Activated CD4-positive, alpha-beta T cell treated with anti-CD3 and anti-CD28 coated beads, Interleukin-2, amount 10 ng/mL, durations not matched to agents 24 days and 14 days (primary cell): ENCODE measurements at regions of chr19 and their contacts with region 1.

Region 1: DNA sequence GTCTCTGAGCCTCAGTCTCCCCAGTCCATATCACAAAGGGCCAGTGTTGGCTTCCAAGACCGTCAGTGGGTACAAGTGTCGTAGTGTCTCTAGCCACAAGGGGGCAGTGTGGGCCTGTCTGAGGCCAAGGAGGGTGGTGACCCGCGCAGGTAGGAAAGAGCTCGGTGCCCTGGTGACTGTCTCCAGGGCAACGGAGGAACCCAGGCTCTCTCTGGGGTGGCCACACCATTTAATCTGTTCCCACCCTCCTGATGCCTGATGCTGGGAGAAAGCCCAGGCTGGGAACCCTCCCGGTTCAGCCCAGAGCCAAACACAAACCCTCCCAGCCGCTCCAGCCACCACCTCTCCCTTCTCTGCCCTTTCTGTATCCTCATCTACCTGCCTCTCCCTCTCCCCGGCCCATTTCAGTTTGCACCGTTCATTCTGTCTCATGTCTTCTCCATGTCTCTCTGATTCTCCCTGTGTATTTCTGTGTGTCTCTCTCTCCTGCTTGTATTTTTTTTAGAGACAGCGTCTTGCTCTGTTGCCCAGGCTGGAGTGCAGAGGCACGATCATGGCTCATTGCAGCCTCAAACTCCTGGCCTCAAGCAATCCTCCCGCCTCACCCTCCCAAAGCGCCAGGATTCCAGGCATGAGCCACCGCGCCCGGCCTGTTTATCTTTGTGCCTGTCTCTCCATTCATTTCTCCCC is 17.5 kb upstream of the MEIS3 start:
- DNase-seq: peak; percentile 95
- H3K4me3 Mint-ChIP-seq: peak overlapping the region; percentile 19
- H3K27ac Mint-ChIP-seq: peak overlapping the region; percentile 19
- H3K4me1 Mint-ChIP-seq: peaks cover 34% of the 10 kb centered on the region
- H3K27me3 Mint-ChIP-seq: peaks cover 24% of the 10 kb centered on the region

Region 2: DNA sequence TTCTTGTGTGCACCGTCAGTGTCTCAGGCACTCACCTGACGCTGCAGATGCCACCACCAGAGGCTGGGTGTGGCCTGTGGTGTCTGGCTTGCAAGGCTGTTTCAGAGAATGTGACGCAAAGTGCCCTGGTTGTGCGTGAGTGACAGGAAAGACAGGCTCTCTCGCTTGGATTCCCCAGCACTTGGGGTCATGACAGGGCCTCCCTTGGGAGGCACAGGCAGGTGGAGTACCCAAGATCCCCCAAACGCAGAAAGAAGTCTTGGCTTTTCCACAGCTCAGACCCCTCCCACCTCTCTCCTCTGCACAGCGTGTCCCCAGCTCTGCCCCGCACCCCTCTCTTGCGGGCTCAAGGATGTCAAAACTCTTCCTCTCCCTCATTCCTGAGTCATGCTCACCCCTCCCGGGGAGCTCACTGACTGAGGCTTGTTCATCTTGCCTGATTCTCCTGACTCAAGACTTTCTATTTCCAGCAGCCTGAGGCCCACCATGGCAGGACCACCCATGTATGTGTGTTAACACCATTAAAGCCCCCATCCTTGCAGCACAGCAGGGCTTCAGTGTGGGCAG is 66.7 kb before region 1 on chr19:
- intact Hi-C with region 1: no loop called
- DNase-seq: no peak
- H3K4me3 Mint-ChIP-seq: no peak overlapping the region
- H3K27ac Mint-ChIP-seq: no peak overlapping the region
- H3K4me1 Mint-ChIP-seq: peaks cover 3% of the 10 kb centered on the region
- H3K27me3 Mint-ChIP-seq: no peaks in the 10 kb centered on the region

Region 3: GRCh38 chr19:47447470-47448359 is 10.9 kb after region 1 on chr19:
- intact Hi-C with region 1: no loop called
- DNase-seq: peak; percentile 92
- H3K4me3 Mint-ChIP-seq: peak overlapping the region; percentile 75
- H3K27ac Mint-ChIP-seq: peak overlapping the region; percentile 16
- H3K4me1 Mint-ChIP-seq: peaks cover 41% of the 10 kb centered on the region
- H3K27me3 Mint-ChIP-seq: peaks cover 68% of the 10 kb centered on the region

Region 4: DNA sequence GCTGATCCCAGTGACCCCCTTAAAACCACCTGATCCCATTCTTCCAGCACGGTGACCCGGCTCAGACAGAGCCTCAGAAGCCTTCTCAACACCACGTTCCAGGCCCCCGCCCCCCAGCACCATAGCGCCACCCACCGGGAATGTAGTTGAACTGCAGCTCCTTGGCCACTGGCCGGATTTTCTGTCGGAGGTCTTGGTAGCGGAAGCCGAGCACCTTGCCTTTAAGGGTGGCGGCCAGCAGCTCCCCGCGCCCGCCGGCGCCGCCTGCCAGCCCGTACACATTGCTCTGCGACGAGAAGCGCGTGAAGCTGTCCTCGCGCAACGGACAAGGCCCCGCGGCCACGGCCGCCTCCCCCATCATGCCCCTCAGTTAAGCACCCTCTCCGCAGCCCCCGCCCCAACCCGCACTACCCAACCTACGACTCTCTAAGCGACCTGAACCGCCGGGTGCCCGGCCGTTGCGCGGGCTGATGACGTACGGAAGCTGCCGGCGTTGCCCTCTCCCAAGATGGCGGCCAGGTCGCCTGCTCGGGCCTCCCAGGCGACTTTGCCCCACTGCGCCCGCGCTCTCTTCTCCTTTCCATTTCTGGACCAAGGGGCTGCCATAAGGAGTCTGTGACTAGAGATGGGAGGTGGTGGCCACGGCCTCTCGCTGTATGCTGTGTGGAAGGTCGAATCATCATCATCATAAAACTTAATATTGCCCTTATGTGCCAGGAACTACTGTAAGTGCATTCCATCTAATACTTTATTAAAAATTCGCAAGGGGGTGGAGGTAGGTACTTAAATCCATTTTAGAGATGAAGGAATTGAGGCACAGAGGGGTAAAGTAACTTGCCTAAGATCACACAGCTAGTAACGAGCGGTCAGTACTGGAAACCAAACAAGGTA is 47.2 kb after region 1 on chr19 and contains the start of gene KPTN:
- intact Hi-C with region 1: loop called (anchors 2 kb)
- DNase-seq: peak; percentile 97
- H3K4me3 Mint-ChIP-seq: peak within 1 kb of the TSS; percentile 99
- H3K27ac Mint-ChIP-seq: peak within 1 kb of the TSS; percentile 98
- H3K4me1 Mint-ChIP-seq: peaks cover 21% of the 10 kb centered on the region
- H3K27me3 Mint-ChIP-seq: no peaks in the 10 kb centered on the region
- total RNA-seq, gene KPTN: 10.1 and 12.2 TPM in 2 replicates

Region 5: DNA sequence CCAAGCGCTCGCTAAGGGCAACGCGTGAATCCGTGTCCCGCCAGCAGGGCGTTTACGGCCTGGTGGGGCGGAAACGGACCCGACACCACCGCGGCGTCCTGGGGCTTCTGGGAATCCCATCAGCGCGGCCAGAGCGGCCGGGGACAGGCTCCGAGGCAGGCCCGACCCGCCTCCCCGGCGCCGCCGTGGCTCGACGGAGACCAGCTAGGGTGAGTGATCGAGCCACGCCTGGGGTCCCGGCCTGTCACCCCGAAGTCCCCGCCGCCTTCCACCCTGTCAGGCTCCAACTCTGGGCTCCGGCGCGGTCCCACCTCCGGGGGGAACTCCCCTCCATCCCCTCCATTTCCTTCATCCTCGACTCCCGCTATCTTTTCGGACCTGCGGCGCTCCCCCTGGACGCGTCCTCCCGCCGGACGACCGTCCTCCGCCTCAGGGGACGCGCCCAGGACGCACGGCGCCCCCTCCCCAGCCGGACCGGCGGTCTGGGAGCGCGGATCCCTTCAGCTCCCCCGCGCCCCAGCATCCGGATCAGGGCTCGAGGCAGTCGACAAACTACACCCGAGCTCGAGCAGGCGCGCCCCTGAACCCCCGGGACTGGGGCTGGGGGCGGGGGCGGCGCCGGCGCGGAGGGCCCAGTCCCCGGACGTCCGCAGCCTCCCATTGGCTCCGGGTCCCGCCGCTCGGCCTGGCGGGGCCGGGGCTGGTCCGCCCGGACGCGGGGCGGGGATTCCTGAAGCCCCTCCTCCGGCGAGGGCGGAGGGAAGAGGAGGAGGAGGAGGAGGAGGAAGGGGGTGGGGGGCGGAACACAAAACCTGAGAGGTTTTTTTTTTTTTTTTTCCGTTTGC is 171.4 kb after region 1 on chr19:
- intact Hi-C with region 1: loop called (anchors 2 kb)
- DNase-seq: peak; percentile 100
- H3K4me3 Mint-ChIP-seq: peak overlapping the region; percentile 87
- H3K27ac Mint-ChIP-seq: peak overlapping the region; percentile 75
- H3K4me1 Mint-ChIP-seq: peaks cover 23% of the 10 kb centered on the region
- H3K27me3 Mint-ChIP-seq: no peaks in the 10 kb centered on the region

Region 6: GRCh38 chr19:47697863-47698609 is 261.2 kb after region 1 on chr19:
- intact Hi-C with region 1: loop called (anchors 1 kb)
- DNase-seq: peak; percentile 87
- H3K4me3 Mint-ChIP-seq: no peak overlapping the region
- H3K27ac Mint-ChIP-seq: no peak overlapping the region
- H3K4me1 Mint-ChIP-seq: no peaks in the 10 kb centered on the region
- H3K27me3 Mint-ChIP-seq: no peaks in the 10 kb centered on the region

Region 7: GRCh38 chr19:47707135-47707925 is 270.5 kb after region 1 on chr19:
- intact Hi-C with region 1: loop called (anchors 1 kb)
- DNase-seq: peak; percentile 92
- H3K4me3 Mint-ChIP-seq: no peak overlapping the region
- H3K27ac Mint-ChIP-seq: no peak overlapping the region
- H3K4me1 Mint-ChIP-seq: peaks cover 7% of the 10 kb centered on the region
- H3K27me3 Mint-ChIP-seq: peaks cover 5% of the 10 kb centered on the region